Right ventricle myocardium inferior (tissue), 1 donor: ENCODE measurements at regions of chr11 and their contacts with region 1.

Region 1: GRCh38 chr11:117199061-117199915 is at the start of gene TAGLN:
- DNase-seq: peak; percentile 79
- ATAC-seq: peak; percentile 77
- total RNA-seq, gene TAGLN: 122 TPM

Region 2: GRCh38 chr11:117010808-117011540 is 188.3 kb before region 1 on chr11:
- intact Hi-C with region 1: no loop called
- DNase-seq: no peak
- ATAC-seq: no peak

Region 3: DNA sequence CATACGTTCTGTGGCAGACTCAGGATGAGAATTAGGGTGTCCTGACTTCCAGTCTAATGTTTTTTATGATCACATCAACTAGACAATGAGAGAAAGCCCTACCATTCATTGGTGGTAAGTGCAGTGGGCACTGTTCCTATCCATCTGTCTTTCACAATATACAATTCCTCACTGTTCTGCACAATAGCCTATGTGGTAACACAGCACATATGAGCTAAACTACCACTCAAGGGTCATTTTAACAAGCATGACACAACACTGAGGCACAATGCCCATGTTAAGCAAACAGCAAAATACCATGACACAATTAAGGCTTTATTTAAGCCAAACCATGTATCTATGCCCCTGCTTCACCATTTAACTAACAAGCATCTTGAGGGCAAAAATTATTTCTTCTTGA is 153.3 kb before region 1 on chr11:
- intact Hi-C with region 1: no loop called
- DNase-seq: no peak
- ATAC-seq: peak; percentile 57

Region 4: DNA sequence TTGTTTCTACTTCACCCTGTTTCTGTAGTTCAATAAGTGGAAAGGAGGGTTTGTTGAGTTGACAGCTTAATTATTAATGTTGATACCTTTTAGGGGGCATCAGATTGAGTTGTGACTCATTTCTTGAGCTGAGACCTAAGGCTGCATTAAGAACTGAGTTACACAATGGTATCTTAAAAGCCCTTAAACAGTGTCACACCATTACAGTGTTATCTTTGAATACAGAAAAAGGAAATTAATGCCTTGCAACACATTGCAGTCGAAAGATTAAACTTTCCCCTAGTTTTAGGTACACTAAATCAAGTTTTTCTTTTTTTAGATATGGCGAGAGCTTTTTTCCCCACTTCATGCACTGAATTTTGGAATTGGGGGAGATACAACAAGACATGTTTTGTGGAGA is 38.5 kb before region 1 on chr11:
- intact Hi-C with region 1: no loop called
- DNase-seq: no peak
- ATAC-seq: no peak

Region 5: DNA sequence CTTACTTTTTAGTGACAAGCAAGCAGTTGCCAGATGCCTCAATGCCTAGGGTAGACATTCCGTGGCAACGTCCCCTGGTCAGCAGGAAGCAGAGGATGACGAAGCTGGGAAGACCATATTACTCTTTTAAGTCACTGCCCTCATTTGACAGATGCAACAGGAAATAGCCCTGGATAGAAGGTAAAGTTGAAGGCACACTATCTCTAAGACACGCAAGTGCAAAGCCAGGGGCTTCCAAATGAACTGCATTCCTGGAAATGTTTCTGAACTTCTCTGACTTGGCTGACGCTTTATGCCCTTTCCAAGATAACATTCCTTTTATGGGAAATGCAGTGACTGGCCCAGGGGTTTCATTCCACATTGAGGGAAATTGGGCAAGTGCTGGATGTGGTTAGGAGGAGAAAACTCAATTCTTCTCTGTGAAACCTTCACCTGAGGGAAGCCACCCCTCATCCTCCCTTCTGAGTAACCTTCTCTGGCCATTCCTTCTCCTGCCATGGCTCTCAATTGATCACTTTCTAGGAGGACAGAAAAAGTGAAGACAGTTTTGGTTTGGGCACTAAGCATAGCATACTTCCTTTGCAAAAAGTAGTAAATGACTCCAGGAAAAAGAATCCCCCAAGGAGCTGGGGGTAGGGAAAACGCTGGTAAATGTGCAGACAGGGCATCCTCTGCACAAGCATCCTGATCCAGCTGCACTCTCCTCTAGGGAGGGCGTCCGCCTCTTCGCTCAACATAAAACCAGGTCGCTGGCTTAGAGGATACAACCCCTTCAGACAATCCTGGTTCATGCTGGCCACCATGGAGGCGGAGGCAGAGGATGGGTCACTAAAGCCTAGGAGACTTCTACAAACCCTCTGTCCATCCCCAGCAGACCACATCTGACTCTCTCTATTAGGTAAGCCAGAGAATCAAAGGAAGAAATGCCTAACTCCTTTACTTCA is 18.1 kb after region 1 on chr11:
- intact Hi-C with region 1: loop called (anchors 2 kb)
- DNase-seq: no peak
- ATAC-seq: no peak